ENCODE measurements at regions of chr17 and their contacts with region 1.

Region 1: DNA sequence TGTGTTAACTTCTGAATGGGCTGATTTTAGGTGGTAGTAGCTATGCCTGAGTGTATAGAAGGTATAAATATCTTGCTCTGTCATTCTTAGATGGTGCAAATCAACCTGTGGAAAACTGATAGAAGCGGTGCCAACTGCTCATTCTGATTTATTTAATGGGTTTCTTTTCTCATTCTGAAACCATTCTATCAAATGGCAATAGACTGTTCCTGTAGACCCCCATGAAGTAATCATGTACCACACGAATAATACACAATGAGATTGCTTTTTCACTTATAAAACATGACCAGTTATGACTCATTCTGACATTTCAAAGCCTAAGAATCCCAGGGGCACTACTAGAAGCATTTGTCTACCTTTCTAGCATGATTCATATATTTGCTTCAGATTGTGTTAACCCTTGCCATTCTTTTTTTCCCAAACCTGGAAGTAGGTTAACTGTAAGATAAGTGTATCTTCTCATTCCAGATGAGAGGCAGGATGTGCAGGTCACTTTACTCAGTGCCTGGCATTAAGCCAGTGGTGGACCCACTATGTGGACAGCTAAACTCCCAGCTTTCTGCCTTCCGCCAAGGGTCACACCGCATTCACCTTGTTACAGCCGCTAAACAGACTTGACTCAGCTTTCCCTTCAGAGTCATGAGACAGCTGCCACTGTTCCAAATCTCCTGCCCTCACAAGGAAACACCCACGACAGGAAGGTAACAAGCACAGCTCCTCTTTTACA is 16.4 kb upstream of the SLC16A11 start:
- DNase-seq: no peak
- H3K4me3 ChIP-seq: no peak overlapping the region
- H3K27ac ChIP-seq: no peak overlapping the region
- H3K4me1 ChIP-seq: no peaks in the 10 kb centered on the region
- H3K27me3 ChIP-seq: no peaks in the 10 kb centered on the region
- CTCF ChIP-seq: no peak
- POLR2A ChIP-seq: no peak

Region 2: GRCh38 chr17:5164436-5164835 is 1895.9 kb before region 1 on chr17:
- intact Hi-C with region 1: loop called (anchors 5 kb)
- DNase-seq: no peak
- H3K4me3 ChIP-seq: no peak overlapping the region
- H3K27ac ChIP-seq: no peak overlapping the region
- H3K4me1 ChIP-seq: no peaks in the 10 kb centered on the region
- H3K27me3 ChIP-seq: no peaks in the 10 kb centered on the region
- CTCF ChIP-seq: no peak
- POLR2A ChIP-seq: no peak

Region 3: GRCh38 chr17:7136266-7136877 is 76.0 kb after region 1 on chr17:
- intact Hi-C with region 1: loop called (anchors 2 kb)
- DNase-seq: no peak
- H3K4me3 ChIP-seq: no peak overlapping the region
- H3K27ac ChIP-seq: no peak overlapping the region
- H3K4me1 ChIP-seq: peaks cover 5% of the 10 kb centered on the region
- H3K27me3 ChIP-seq: no peaks in the 10 kb centered on the region
- CTCF ChIP-seq: peak; percentile 84 to 90 (median 86)
- POLR2A ChIP-seq: no peak